Right cardiac atrium (tissue), 5 donors: ENCODE measurements at regions of chr7 and their contacts with region 1.

Region 1: GRCh38 chr7:92621026-92621540 is 30.9 kb upstream of the FAM133B start:
- DNase-seq: peak; percentile 46 to 62 (median 57)
- ATAC-seq: peak; percentile 82
- H3K4me3 ChIP-seq: no peak overlapping the region
- H3K27ac ChIP-seq: no peak overlapping the region
- H3K4me1 ChIP-seq: peaks cover 1% of the 10 kb centered on the region
- H3K27me3 ChIP-seq: no peaks in the 10 kb centered on the region

Region 2: GRCh38 chr7:92260248-92260781 is 360.8 kb before region 1 on chr7:
- intact Hi-C with region 1: no loop called
- DNase-seq: no peak
- ATAC-seq: no peak
- H3K4me3 ChIP-seq: no peak overlapping the region
- H3K27ac ChIP-seq: no peak overlapping the region
- H3K4me1 ChIP-seq: peaks cover 2% of the 10 kb centered on the region
- H3K27me3 ChIP-seq: no peaks in the 10 kb centered on the region

Region 3: DNA sequence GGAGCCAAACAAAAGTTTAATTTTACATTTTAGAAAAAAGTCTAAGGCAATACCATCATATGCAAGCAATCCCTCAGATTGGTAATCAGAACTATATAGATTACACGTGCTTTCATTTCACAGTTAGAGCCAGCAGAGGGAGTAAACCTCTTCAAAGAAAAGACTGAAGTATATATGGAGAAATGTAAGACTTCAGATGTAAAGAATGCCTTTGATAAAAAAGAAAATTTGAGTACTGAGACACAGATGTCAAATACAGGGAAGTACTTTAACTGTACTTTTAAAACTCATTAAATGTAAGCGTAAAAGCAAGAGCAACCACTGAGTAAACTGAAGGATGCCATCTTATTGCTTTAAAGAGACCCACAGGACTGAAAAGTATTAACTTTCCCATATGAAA is 70.5 kb after region 1 on chr7:
- intact Hi-C with region 1: loop called in 1 of 4 experiments (anchors 10 kb)
- DNase-seq: no peak
- ATAC-seq: no peak
- H3K4me3 ChIP-seq: no peak overlapping the region
- H3K27ac ChIP-seq: no peak overlapping the region
- H3K4me1 ChIP-seq: no peaks in the 10 kb centered on the region
- H3K27me3 ChIP-seq: no peaks in the 10 kb centered on the region

Region 4: DNA sequence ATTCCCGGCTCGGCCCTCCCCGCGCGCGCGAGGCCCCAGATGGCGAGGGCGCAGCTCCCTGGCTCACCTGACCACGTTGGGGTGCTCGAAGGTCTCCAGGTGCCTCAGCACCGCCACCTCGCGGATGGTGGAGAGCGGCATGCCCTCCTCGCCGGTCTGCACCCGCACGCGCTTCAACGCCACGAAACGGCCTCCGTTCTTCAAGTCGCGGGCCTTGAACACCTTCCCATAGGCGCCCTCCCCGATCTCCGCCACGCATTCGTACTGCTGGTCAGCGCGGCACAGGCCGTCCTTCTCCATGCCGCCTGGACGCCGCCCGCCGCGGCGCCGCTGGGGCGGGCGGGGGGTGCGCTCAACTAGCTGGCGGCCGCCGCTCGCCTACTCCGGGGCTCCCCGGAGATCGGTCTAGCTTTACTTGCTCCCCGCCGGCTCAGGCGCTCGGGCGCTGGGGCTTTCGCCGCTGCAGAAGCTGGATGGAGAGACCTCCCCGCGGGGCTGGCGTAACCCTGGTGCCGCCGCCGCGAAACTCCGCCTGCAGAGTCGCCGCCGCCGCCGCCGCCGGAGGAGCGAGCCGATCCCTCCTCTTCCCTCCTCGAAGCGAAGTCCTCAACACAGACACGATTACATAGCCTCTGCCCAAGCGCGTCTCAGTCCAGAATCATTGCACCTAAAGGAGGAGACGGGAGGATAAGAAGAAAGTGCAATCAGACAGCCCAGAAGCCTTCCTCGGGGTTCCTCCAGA is 212.1 kb after region 1 on chr7:
- intact Hi-C with region 1: loop called in 3 of 4 experiments (anchors 5 to 10 kb)
- DNase-seq: peak; percentile 81 to 94 (median 94)
- ATAC-seq: peak; percentile 79 to 82
- H3K4me3 ChIP-seq: peak overlapping the region; percentile 60
- H3K27ac ChIP-seq: peak overlapping the region; percentile 90
- H3K4me1 ChIP-seq: no peaks in the 10 kb centered on the region
- H3K27me3 ChIP-seq: no peaks in the 10 kb centered on the region

Region 5: GRCh38 chr7:93055543-93056107 is 434.5 kb after region 1 on chr7:
- intact Hi-C with region 1: loop called in 2 of 4 experiments (anchors 10 kb)
- DNase-seq: no peak
- ATAC-seq: no peak
- H3K4me3 ChIP-seq: no peak overlapping the region
- H3K27ac ChIP-seq: no peak overlapping the region
- H3K4me1 ChIP-seq: no peaks in the 10 kb centered on the region
- H3K27me3 ChIP-seq: no peaks in the 10 kb centered on the region